AG04450 (cell line): ENCODE measurements at regions of chr22 and their contacts with region 1.

Region 1: DNA sequence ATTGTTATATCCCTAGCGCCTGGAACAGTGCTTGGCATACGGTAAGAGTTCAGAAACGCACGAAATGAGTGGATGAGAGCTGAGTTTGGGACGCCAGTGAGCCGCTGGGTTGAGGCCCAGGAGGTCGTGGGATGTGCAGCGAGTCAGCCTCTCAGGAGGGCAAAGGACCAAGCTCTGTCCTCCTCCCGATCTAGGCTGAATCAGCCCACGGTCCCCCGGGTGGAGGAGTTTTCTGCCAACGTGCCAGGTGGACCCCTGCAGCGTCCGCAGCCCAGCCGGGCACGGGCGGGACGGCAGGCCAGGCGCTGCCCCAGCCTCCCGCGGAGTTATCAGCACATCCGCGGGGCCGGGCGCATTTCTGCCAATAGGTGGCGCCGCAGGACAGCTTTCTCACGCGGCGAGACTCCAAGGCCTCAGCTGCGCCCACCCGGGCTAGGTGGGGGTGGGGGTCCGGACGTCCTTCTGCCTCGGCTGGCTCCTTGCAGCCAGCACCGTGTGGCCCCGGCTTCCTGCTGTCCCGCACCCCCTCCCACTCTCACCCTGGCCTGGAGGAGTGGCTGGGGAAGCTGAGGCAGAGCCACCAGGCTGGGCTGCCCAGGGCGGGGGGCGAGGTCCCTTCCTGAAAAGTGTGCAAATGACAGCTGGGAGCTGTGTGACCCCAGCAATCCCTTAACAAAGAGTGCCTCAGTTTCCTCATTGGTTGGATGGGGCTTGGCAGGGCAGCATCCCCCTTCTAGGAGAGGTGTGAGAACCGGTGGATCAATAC is 2.2 kb upstream of the RPS19BP1 start:
- DNase-seq: no peak
- H3K4me3 ChIP-seq: no peak overlapping the region
- H3K27ac ChIP-seq: peak overlapping the region; percentile 1
- H3K27me3 ChIP-seq: peaks cover 3% of the 10 kb centered on the region
- CTCF ChIP-seq: peak; percentile 82

Region 2: GRCh38 chr22:40036591-40037225 is 501.9 kb after region 1 on chr22:
- CTCF ChIA-PET with region 1: interaction called, 57 read pairs
- POLR2A ChIA-PET with region 1: no interaction called
- DNase-seq: peak; percentile 58
- H3K4me3 ChIP-seq: no peak overlapping the region
- H3K27ac ChIP-seq: no peak overlapping the region
- H3K27me3 ChIP-seq: peaks cover 69% of the 10 kb centered on the region
- CTCF ChIP-seq: peak; percentile 88

Region 3: GRCh38 chr22:40044102-40044869 is 509.5 kb after region 1 on chr22:
- CTCF ChIA-PET with region 1: interaction called, 57 read pairs
- POLR2A ChIA-PET with region 1: interaction called, 4 read pairs
- DNase-seq: peak; percentile 99
- H3K4me3 ChIP-seq: peak overlapping the region; percentile 96
- H3K27ac ChIP-seq: peak overlapping the region; percentile 78
- H3K27me3 ChIP-seq: peaks cover 23% of the 10 kb centered on the region
- CTCF ChIP-seq: no peak